Caco-2 (cell line): ENCODE measurements at regions of chr9 and their contacts with region 1.

Region 1: DNA sequence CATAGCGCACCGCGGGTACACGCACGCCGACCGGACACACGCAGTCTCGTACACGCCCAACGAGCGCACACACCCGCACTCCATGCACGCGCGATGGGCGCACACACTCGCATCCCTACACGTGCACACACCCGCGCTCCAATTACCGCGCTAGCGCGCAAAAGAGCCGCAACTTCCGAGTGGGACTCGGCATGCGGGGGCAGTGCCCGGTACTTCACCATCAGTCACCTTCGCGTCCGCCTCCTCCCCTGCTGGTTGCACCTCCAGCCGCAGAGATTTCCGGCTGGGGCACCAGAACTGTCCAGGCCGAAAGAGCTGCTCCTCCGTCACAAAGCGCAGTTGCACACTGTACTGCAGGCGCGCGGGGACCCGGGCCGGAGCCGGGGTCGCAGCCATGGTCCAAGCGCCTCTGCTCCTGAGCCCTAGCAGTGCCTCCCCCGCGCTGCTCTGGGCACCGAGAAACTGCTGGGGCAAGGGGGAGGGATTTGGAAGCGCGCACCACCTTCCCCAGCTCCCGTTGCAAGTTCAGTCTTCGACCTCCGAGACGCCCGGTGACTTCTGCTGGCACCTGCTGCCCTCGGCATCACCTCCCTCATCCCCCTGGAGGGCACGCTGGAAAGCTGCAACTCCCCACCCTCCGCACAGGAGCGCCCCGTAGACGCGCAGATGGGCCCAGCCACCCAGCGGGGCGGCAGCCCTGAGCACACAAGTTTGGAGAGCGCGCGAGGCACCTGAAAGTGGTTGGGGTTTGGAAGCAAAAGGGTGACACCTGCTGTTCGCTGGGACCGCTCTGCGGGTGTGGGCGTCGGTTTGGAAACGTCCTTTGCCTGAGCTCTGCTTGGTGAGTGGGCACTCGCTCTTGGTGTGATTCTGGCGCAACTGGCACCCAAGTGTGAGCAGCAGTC is 337.4 kb upstream of the PUM3 start:
- DNase-seq: peak in 1 of 2 experiments; percentile 32
- H3K4me3 ChIP-seq: no peak overlapping the region
- H3K4me3 Mint-ChIP-seq: no peak overlapping the region
- H3K27ac Mint-ChIP-seq: no peak overlapping the region
- H3K4me1 ChIP-seq: no peaks in the 10 kb centered on the region
- H3K4me1 Mint-ChIP-seq: peaks cover 13% of the 10 kb centered on the region
- H3K27me3 ChIP-seq: no peaks in the 10 kb centered on the region
- H3K27me3 Mint-ChIP-seq: peaks cover 5% of the 10 kb centered on the region
- CTCF ChIP-seq: peak in 1 of 2 experiments; percentile 25

Region 2: DNA sequence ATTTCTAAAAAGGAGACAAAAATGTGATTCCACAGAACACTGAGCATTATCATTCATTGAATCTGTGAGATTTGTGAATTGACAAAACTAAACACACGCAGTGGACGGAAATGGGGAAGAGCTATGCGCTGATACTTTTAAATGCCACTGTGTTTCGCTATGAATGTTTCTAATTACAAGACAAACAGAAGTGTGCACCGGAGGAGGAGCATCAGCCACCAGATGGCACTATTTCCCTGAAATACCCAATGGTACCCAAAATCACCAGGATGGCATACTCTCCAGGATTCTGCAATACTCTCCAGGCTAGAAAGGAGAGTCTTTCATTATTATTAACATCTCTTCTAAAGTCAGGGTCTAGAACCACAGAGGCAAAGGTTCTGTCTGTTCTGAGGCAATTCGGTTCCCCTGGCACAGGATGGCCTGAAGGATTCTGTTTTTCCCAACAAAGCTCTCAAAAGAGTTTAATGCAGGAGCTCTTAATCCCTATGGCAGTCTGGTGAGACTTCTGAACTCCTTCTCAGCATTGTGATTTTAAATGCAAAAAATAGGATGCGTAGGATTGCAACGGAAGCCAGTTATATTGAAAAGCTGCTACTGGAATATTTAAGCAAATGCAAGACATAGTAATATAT is 323.6 kb before region 1 on chr9:
- CTCF ChIA-PET with region 1: interaction called, 3 read pairs
- POLR2A ChIA-PET with region 1: no interaction called
- intact Hi-C with region 1: loop called (anchors 1 kb)
- DNase-seq: peak; percentile 40 to 65
- H3K4me3 ChIP-seq: no peak overlapping the region
- H3K4me3 Mint-ChIP-seq: no peak overlapping the region
- H3K27ac Mint-ChIP-seq: no peak overlapping the region
- H3K4me1 ChIP-seq: no peaks in the 10 kb centered on the region
- H3K4me1 Mint-ChIP-seq: no peaks in the 10 kb centered on the region
- H3K27me3 ChIP-seq: no peaks in the 10 kb centered on the region
- H3K27me3 Mint-ChIP-seq: peaks cover 19% of the 10 kb centered on the region
- CTCF ChIP-seq: peak; percentile 52 to 62

Region 3: GRCh38 chr9:2872257-2872935 is 308.9 kb before region 1 on chr9:
- CTCF ChIA-PET with region 1: interaction called, 3 read pairs
- POLR2A ChIA-PET with region 1: no interaction called
- intact Hi-C with region 1: loop called (anchors 5 kb)
- DNase-seq: peak in 1 of 2 experiments; percentile 36
- H3K4me3 ChIP-seq: no peak overlapping the region
- H3K4me3 Mint-ChIP-seq: no peak overlapping the region
- H3K27ac Mint-ChIP-seq: no peak overlapping the region
- H3K4me1 ChIP-seq: no peaks in the 10 kb centered on the region
- H3K4me1 Mint-ChIP-seq: peaks cover 6% of the 10 kb centered on the region
- H3K27me3 ChIP-seq: no peaks in the 10 kb centered on the region
- H3K27me3 Mint-ChIP-seq: peaks cover 25% of the 10 kb centered on the region
- CTCF ChIP-seq: peak in 1 of 2 experiments; percentile 29

Region 4: DNA sequence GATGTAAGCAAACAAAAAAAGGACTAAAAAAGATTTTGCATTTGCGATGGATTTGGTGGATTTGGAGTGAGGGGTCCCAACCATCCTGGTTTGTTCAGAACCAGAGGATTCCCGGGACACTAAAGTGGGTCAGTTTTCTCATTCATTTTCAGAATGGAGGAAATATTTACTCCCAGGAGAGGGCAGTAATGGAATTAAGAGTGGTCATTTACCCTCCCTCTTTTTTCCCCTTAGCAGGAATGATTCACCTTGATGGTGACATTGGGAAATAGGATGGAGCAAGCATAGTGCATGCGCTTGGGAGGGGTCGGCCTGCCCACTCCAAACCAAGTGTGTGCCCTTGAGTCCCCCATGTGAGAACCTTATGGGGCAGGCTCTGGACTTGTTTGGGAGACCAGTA is 173.2 kb before region 1 on chr9:
- CTCF ChIA-PET with region 1: no interaction called
- POLR2A ChIA-PET with region 1: no interaction called
- intact Hi-C with region 1: loop called (anchors 10 kb)
- DNase-seq: no peak
- H3K4me3 ChIP-seq: no peak overlapping the region
- H3K4me3 Mint-ChIP-seq: no peak overlapping the region
- H3K27ac Mint-ChIP-seq: no peak overlapping the region
- H3K4me1 ChIP-seq: peaks cover 4% of the 10 kb centered on the region; the same call in 1 of the 2 replicates
- H3K4me1 Mint-ChIP-seq: peaks cover 6% of the 10 kb centered on the region
- H3K27me3 ChIP-seq: no peaks in the 10 kb centered on the region
- H3K27me3 Mint-ChIP-seq: peaks cover 2% of the 10 kb centered on the region
- CTCF ChIP-seq: no peak

Region 5: GRCh38 chr9:3205421-3206095 is 24.3 kb after region 1 on chr9:
- CTCF ChIA-PET with region 1: no interaction called
- POLR2A ChIA-PET with region 1: no interaction called
- intact Hi-C with region 1: no loop called
- DNase-seq: no peak
- H3K4me3 ChIP-seq: no peak overlapping the region
- H3K4me3 Mint-ChIP-seq: no peak overlapping the region
- H3K27ac Mint-ChIP-seq: no peak overlapping the region
- H3K4me1 ChIP-seq: no peaks in the 10 kb centered on the region
- H3K4me1 Mint-ChIP-seq: no peaks in the 10 kb centered on the region
- H3K27me3 ChIP-seq: no peaks in the 10 kb centered on the region
- H3K27me3 Mint-ChIP-seq: no peaks in the 10 kb centered on the region
- CTCF ChIP-seq: no peak